Activated CD4-positive, alpha-beta T cell treated with anti-CD3 and anti-CD28 coated beads, Interleukin-2, amount 10 ng/mL, durations not matched to agents 24 days and 14 days (primary cell): ENCODE measurements at regions of chr6 and their contacts with region 1.

Region 1: GRCh38 chr6:45922728-45923351 is 92.8 kb downstream of the CLIC5 start:
- DNase-seq: peak; percentile 90
- H3K4me3 Mint-ChIP-seq: peak overlapping the region; percentile 10
- H3K27ac Mint-ChIP-seq: peak overlapping the region; percentile 89
- H3K4me1 Mint-ChIP-seq: peaks cover 46% of the 10 kb centered on the region
- H3K27me3 Mint-ChIP-seq: no peaks in the 10 kb centered on the region

Region 2: GRCh38 chr6:44475779-44476434 is 1446.9 kb before region 1 on chr6:
- intact Hi-C with region 1: loop called (anchors 2 kb)
- DNase-seq: peak; percentile 93
- H3K4me3 Mint-ChIP-seq: no peak overlapping the region
- H3K27ac Mint-ChIP-seq: no peak overlapping the region
- H3K4me1 Mint-ChIP-seq: no peaks in the 10 kb centered on the region
- H3K27me3 Mint-ChIP-seq: peaks cover 13% of the 10 kb centered on the region

Region 3: GRCh38 chr6:44932651-44933091 is 990.2 kb before region 1 on chr6:
- intact Hi-C with region 1: loop called (anchors 5 kb)
- DNase-seq: peak; percentile 80
- H3K4me3 Mint-ChIP-seq: peak overlapping the region; percentile 89
- H3K27ac Mint-ChIP-seq: peak overlapping the region; percentile 96
- H3K4me1 Mint-ChIP-seq: peaks cover 42% of the 10 kb centered on the region
- H3K27me3 Mint-ChIP-seq: no peaks in the 10 kb centered on the region

Region 4: GRCh38 chr6:45049188-45049843 is 873.5 kb before region 1 on chr6:
- intact Hi-C with region 1: no loop called
- DNase-seq: no peak
- H3K4me3 Mint-ChIP-seq: peak overlapping the region; percentile 36
- H3K27ac Mint-ChIP-seq: peak overlapping the region; percentile 66
- H3K4me1 Mint-ChIP-seq: peaks cover 27% of the 10 kb centered on the region
- H3K27me3 Mint-ChIP-seq: no peaks in the 10 kb centered on the region

Region 5: GRCh38 chr6:45377554-45378333 is 545.1 kb before region 1 on chr6 and contains the start of gene SUPT3H:
- intact Hi-C with region 1: loop called (anchors 1 kb)
- DNase-seq: peak; percentile 97
- H3K4me3 Mint-ChIP-seq: peak within 1 kb of the TSS; percentile 99
- H3K27ac Mint-ChIP-seq: peak within 1 kb of the TSS; percentile 100
- H3K4me1 Mint-ChIP-seq: peaks cover 25% of the 10 kb centered on the region
- H3K27me3 Mint-ChIP-seq: no peaks in the 10 kb centered on the region
- total RNA-seq, gene SUPT3H: 12.4 and 13.0 TPM in 2 replicates

Region 6: DNA sequence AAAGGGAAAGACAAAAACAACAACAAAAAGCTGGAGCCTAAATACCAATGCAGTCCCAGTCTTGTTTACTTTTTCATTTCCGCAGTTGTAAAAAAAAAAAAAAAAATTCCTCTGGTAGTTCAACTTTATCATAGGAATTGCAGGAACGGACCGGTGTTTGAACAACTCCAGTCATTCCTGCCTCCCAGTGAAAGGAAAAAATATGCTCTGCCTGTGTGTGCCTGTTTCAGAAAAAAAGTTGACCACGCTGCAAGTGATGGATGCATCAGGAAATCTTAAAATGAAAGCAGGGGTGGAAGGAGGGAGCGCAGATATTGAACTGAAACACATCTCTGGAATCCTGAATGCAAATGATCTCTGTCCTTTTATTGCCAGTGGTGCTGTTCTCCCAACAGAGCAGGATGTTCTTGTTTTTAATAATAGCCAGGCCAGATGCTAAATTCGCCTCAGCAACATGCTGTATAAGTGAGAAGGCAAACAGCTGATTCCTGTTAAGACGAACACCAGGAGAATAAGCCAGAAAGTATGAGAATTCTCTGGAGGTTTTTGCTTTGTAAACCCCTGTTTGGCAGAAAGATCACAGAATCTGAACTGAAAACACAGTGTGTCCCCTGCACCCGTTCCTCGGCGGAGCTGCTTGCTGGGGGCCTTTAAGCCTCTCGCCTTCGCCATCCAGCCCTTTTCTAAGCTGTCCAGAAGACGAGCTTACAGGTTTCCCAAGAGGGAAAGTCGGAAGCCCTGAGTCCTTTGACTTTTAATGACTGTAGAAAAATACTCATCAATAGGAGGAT is 366.7 kb before region 1 on chr6:
- intact Hi-C with region 1: loop called (anchors 5 kb)
- DNase-seq: no peak
- H3K4me3 Mint-ChIP-seq: no peak overlapping the region
- H3K27ac Mint-ChIP-seq: no peak overlapping the region
- H3K4me1 Mint-ChIP-seq: peaks cover 41% of the 10 kb centered on the region
- H3K27me3 Mint-ChIP-seq: no peaks in the 10 kb centered on the region

Region 7: DNA sequence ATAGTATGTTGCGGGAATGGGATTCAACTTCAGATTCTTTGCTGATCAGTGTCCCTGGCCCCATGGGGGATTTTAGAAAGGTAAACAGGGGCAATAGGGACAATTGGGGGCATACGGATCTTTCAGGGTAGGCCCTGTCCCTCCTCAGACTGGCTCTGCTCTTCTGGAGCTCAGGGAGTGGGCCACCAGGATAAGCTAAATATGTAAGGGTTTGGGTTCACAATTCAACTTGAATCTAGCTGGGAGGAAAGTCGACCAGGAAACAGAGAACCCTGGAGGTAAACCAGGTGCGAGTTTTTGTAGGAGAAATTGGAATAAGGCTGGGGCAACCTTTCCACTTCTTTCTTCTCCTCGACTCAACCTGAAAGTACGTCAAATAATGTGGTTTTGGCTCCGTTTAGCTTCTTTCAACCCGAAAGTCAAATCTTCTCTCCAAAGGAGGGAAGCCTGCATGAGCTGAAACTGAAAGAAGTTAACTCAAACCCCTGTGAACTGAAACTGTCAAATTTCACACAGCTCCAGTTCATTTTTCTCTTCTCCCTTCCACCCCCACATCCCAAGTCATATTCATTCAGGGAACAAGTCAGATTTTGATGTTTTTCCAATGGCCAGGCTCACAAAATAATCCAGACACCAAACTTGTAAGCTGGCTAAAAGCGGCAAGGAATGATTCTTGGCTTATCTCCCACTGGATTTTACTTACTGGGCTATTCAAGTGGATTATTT is 185.3 kb before region 1 on chr6:
- intact Hi-C with region 1: loop called (anchors 1 kb)
- DNase-seq: peak; percentile 82
- H3K4me3 Mint-ChIP-seq: peak overlapping the region; percentile 68
- H3K27ac Mint-ChIP-seq: peak overlapping the region; percentile 85
- H3K4me1 Mint-ChIP-seq: peaks cover 53% of the 10 kb centered on the region
- H3K27me3 Mint-ChIP-seq: peaks cover 3% of the 10 kb centered on the region

Region 8: GRCh38 chr6:45870531-45870930 is 52.3 kb before region 1 on chr6:
- intact Hi-C with region 1: loop called (anchors 1 kb)
- DNase-seq: no peak
- H3K4me3 Mint-ChIP-seq: no peak overlapping the region
- H3K27ac Mint-ChIP-seq: no peak overlapping the region
- H3K4me1 Mint-ChIP-seq: peaks cover 3% of the 10 kb centered on the region
- H3K27me3 Mint-ChIP-seq: peaks cover 4% of the 10 kb centered on the region

Region 9: GRCh38 chr6:45911691-45912090 is 11.1 kb before region 1 on chr6:
- intact Hi-C with region 1: no loop called
- DNase-seq: no peak
- H3K4me3 Mint-ChIP-seq: no peak overlapping the region
- H3K27ac Mint-ChIP-seq: no peak overlapping the region
- H3K4me1 Mint-ChIP-seq: no peaks in the 10 kb centered on the region
- H3K27me3 Mint-ChIP-seq: peaks cover 5% of the 10 kb centered on the region

Region 10: DNA sequence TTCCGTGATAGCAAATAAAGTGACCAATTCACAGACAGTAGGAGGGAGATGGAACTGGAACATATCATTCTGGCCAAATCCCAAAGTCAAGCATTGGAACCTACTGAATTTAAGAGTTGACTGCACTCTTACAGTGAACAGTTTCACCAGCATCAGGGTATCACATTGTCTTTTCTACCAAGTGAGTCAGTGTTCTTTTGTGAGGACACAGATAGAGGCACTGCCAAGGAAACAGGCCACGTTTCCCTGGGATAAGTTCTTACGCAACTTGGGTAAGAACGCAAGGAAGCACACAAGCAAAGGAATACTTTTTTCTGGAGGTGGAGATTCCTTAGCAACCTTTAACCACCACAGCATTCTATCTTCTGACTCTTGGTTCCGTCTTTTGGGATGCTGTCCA is 276.5 kb after region 1 on chr6:
- intact Hi-C with region 1: no loop called
- DNase-seq: no peak
- H3K4me3 Mint-ChIP-seq: no peak overlapping the region
- H3K27ac Mint-ChIP-seq: no peak overlapping the region
- H3K4me1 Mint-ChIP-seq: no peaks in the 10 kb centered on the region
- H3K27me3 Mint-ChIP-seq: peaks cover 8% of the 10 kb centered on the region